Endothelial cell of umbilical vein (primary cell): ENCODE measurements at regions of chr10 and their contacts with region 1.

Region 1: GRCh38 chr10:110137142-110137545 is 70.3 kb upstream of the MXI1 start:
- DNase-seq: peak; percentile 74
- H3K4me3 ChIP-seq: no peak overlapping the region
- H3K27ac ChIP-seq: no peak overlapping the region
- H3K4me1 ChIP-seq: peaks cover 14% of the 10 kb centered on the region
- H3K27me3 ChIP-seq: no peaks in the 10 kb centered on the region
- CTCF ChIP-seq: peak; percentile 49 to 53
- POLR2A ChIP-seq: no peak

Region 2: DNA sequence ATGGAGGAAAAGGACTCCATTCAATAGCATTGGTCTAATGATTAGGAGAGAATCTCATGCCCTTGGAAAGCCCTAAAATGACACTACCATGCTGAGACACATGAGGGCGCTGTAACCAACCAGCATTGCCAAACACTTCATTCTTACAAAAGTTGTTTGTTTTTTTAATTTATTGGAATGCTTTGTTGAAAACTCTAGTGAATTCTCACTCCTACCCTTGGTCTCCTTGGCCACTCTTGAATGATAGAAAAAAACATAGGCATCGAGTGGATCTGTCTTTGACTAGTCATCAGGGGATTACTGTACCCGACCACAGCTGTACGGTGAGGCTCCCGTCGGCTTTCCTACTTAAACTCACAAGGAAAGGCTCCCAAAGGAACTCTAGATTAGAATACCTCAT is 158.7 kb before region 1 on chr10:
- CTCF ChIA-PET with region 1: interaction called, 11 read pairs
- POLR2A ChIA-PET with region 1: no interaction called
- dilution Hi-C with region 1: no loop called
- intact Hi-C with region 1: loop called (anchors 1 kb)
- DNase-seq: peak; percentile 66
- H3K4me3 ChIP-seq: no peak overlapping the region
- H3K27ac ChIP-seq: no peak overlapping the region
- H3K4me1 ChIP-seq: no peaks in the 10 kb centered on the region
- H3K27me3 ChIP-seq: no peaks in the 10 kb centered on the region
- CTCF ChIP-seq: peak; percentile 71 to 77
- POLR2A ChIP-seq: no peak

Region 3: GRCh38 chr10:110210674-110211464 is 73.7 kb after region 1 on chr10:
- CTCF ChIA-PET with region 1: interaction called, 42 read pairs
- POLR2A ChIA-PET with region 1: no interaction called
- dilution Hi-C with region 1: no loop called
- intact Hi-C with region 1: loop called (anchors 1 kb)
- DNase-seq: peak; percentile 99
- H3K4me3 ChIP-seq: peak overlapping the region; percentile 48 to 68 (median 57)
- H3K27ac ChIP-seq: no peak overlapping the region
- H3K4me1 ChIP-seq: peaks cover 4% of the 10 kb centered on the region
- H3K27me3 ChIP-seq: peaks cover 21 to 29% of the 10 kb centered on the region in 2 experiments
- CTCF ChIP-seq: no peak
- POLR2A ChIP-seq: no peak

Region 4: DNA sequence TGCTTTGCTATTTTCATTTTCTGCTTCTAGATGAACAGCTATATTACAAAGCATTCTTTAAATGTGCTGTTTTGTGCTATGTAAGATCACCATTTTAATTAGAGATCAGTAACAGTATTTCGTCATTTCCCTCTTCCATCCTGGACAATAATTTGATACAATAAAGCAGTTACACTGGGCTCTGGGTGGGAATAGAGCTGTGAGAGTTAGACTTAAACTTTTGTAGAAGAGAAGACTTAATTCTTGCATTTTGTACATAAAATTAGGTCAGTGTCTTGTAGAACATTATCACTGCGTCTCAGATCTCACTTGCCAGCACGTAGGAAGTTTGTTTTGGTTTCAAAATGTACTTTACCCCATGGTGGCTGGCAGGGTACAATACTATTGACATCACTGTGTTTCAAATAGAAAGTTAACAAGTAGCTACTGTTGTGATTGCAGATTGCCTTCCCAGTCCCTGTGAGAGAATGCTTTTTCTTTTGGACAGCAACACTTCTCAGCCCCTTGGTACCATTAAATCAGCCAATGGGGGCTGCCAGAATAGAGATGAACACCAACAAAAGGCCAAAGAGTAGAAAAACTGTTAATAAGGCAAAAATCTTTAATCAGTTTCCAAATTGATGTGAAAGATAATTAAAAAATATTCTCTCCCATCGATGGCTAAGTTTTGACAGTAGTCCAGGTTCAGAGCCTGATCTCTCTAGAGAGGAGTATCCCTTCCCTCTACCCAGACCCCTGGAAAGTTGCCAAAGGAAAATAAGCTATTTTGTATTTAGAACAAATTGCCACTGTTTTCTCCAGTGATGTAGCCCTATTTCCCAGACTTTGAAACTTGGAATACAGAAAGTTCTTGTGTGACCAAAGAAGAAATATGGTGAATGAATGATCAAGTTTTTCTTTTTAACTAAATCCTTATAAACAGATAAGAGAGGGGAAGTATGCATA is 132.5 kb after region 1 on chr10:
- CTCF ChIA-PET with region 1: interaction called, 25 read pairs
- POLR2A ChIA-PET with region 1: no interaction called
- dilution Hi-C with region 1: no loop called
- intact Hi-C with region 1: no loop called
- DNase-seq: no peak
- H3K4me3 ChIP-seq: no peak overlapping the region
- H3K27ac ChIP-seq: no peak overlapping the region
- H3K4me1 ChIP-seq: no peaks in the 10 kb centered on the region
- H3K27me3 ChIP-seq: no peaks in the 10 kb centered on the region
- CTCF ChIP-seq: no peak
- POLR2A ChIP-seq: no peak